ENCODE measurements at regions of chr3 and their contacts with region 1.

Region 1: DNA sequence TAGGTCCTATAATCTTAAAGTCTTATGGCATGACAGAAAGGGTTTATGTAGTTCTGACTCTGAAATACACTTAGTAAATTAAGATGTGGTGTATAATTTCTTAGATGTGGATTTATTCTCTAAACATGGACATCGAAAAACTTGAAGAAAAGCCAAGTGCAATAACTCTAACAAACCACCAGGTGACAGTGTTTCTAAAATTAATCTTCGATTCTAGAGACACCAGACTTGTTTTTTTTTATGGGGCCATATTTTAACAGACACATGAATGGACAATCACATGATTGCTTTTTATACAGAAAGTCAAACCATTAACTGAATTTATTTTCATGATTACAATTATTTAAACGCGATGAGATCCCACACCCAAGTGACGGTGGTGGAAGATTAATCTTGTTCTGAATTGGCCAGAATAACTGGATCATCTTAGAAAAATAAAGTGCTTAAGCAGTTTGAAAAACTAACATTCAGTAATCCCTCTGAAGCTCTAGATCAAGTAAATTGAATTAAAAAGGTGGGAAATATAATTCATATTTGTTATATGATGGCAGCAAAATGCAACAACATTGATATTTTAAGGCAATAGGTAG is 305.1 kb downstream of the LSAMP start:
- DNase-seq: no peak
- H3K4me3 ChIP-seq: no peak overlapping the region
- H3K27ac ChIP-seq: peak overlapping the region in 1 of 4 donors; percentile 50
- H3K4me1 ChIP-seq: peaks cover 0 to 6% (median 1%) of the 10 kb centered on the region in 4 donors
- H3K27me3 ChIP-seq: no peaks in the 10 kb centered on the region
- CTCF ChIP-seq: peak; percentile 66 to 92 (median 85)
- EP300 ChIP-seq: no peak
- POLR2A ChIP-seq: no peak

Region 2: GRCh38 chr3:115518100-115518852 is 621.9 kb before region 1 on chr3:
- in situ Hi-C with region 1: no loop called
- intact Hi-C with region 1: no loop called
- DNase-seq: no peak
- H3K4me3 ChIP-seq: no peak overlapping the region
- H3K27ac ChIP-seq: no peak overlapping the region
- H3K4me1 ChIP-seq: peaks cover 0 to 3% (median 0%) of the 10 kb centered on the region in 4 donors
- H3K27me3 ChIP-seq: no peaks in the 10 kb centered on the region
- CTCF ChIP-seq: no peak
- EP300 ChIP-seq: no peak
- POLR2A ChIP-seq: no peak

Region 3: GRCh38 chr3:115980709-115981108 is 159.5 kb before region 1 on chr3:
- in situ Hi-C with region 1: no loop called
- intact Hi-C with region 1: no loop called
- DNase-seq: no peak
- H3K4me3 ChIP-seq: no peak overlapping the region
- H3K27ac ChIP-seq: no peak overlapping the region
- H3K4me1 ChIP-seq: no peaks in the 10 kb centered on the region
- H3K27me3 ChIP-seq: no peaks in the 10 kb centered on the region
- CTCF ChIP-seq: no peak
- EP300 ChIP-seq: no peak
- POLR2A ChIP-seq: no peak

Region 4: GRCh38 chr3:116445311-116445841 is 305.2 kb after region 1 on chr3 and contains the start of gene LSAMP:
- in situ Hi-C with region 1: no loop called
- intact Hi-C with region 1: loop called (anchors 5 kb)
- DNase-seq: peak; percentile 13
- H3K4me3 ChIP-seq: peak within 1 kb of the TSS; percentile 25 to 43 (median 34)
- H3K27ac ChIP-seq: peak within 1 kb of the TSS; percentile 23 to 70 (median 57)
- H3K4me1 ChIP-seq: no peaks in the 10 kb centered on the region
- H3K27me3 ChIP-seq: no peaks in the 10 kb centered on the region
- CTCF ChIP-seq: no peak
- EP300 ChIP-seq: no peak
- POLR2A ChIP-seq: no peak
- total RNA-seq, gene LSAMP: 3.4 to 8.2 (median 5.4) TPM

Region 5: DNA sequence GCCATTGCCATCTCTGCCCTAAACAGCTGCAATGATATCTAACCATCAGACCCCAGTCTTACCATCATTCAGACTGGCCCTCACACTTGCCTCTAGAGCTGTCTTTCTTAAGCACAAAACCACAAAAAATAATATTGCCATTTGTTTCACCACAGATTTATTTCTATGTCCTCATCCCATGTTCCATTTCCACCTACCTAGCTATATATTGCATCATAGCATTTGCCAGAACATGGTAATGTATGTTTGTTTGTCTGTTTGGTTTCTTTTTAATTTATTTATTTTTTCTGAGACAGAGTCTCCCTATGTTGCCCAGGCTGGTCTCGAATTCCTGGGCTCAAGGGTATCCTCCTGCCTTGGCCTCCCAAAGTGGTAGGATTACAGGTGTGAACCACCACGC is 550.8 kb after region 1 on chr3:
- in situ Hi-C with region 1: no loop called
- intact Hi-C with region 1: no loop called
- DNase-seq: no peak
- H3K4me3 ChIP-seq: no peak overlapping the region
- H3K27ac ChIP-seq: no peak overlapping the region
- H3K4me1 ChIP-seq: no peaks in the 10 kb centered on the region
- H3K27me3 ChIP-seq: no peaks in the 10 kb centered on the region
- CTCF ChIP-seq: no peak
- EP300 ChIP-seq: no peak
- POLR2A ChIP-seq: no peak

Region 6: DNA sequence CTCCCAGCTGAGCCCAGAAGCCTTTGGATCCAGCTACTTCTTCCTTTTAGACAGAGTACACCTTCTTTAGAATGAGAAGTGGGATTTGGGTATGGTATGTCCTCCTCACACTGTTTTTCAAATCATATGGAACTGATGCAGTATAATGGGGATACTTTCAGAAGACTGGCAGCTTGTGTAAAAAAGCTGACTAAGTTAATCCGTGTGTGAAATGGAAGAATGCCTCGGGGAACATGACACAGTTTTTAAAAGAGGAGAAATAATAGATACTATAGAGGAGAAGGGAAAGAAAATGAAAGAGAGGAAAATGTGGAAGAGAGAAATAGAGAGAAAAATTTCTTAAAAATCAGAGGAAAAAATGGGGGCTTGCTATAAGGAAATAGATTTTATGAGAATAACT is 617.1 kb after region 1 on chr3:
- in situ Hi-C with region 1: loop called in 3 of 4 experiments (anchors 10 to 25 kb)
- intact Hi-C with region 1: no loop called
- DNase-seq: no peak
- H3K4me3 ChIP-seq: no peak overlapping the region
- H3K27ac ChIP-seq: no peak overlapping the region
- H3K4me1 ChIP-seq: no peaks in the 10 kb centered on the region
- H3K27me3 ChIP-seq: peaks cover 5% of the 10 kb centered on the region
- CTCF ChIP-seq: no peak
- EP300 ChIP-seq: no peak
- POLR2A ChIP-seq: no peak

Measured in transverse colon (tissue), 4 donors.